Transverse colon (tissue), 4 donors: ENCODE measurements at regions of chr6 and their contacts with region 1.

Region 1: DNA sequence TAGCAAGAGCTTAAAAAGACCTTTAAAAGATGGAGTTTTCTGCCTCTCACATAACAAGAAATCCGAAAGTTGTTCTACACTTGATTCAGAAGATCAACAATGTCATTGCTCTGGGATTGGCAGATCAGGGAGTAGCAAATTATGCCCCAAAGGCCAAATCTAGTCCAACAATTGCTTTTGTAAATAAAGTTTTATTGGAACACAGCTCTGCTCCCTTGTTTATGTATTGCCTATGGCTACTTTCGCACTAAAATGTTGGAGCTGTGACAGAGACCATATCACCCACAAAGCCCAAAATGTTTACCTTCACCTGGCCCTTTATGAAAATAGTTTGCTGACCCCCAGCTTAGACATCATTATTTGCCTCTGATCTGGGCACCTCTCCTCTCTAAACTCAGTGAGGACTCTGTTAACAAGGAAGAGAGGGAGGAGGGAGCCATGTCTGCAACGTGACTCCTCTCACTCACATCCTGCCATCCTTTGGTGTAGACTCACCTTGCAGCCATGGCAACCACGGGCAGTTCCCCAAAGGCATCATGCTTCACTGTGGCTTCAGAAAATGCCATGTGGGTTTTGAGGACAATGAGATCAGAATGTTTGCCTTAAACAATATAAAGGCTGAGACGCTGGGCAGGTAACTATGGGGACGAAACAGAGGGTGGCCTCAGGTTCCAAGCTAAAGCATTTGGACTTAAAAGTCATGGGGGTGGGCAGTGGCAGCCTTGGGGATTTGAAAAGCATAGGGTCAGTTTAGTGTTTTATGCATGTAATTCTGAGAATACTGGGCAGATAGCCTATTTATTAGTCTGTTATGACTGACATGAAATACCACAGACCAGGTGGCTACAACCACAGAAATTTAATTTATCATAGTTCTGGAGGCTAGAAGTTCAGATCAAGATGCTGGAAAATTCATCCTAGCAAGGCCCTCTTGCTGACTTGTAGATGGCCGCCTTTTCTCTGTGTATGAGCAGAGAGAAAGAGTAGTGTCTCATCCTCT is 149.7 kb upstream of the TNFAIP3 start:
- DNase-seq: no peak
- H3K4me3 ChIP-seq: no peak overlapping the region
- H3K27ac ChIP-seq: no peak overlapping the region
- H3K4me1 ChIP-seq: no peaks in the 10 kb centered on the region
- H3K27me3 ChIP-seq: no peaks in the 10 kb centered on the region
- CTCF ChIP-seq: no peak
- EP300 ChIP-seq: no peak
- POLR2A ChIP-seq: no peak

Region 2: DNA sequence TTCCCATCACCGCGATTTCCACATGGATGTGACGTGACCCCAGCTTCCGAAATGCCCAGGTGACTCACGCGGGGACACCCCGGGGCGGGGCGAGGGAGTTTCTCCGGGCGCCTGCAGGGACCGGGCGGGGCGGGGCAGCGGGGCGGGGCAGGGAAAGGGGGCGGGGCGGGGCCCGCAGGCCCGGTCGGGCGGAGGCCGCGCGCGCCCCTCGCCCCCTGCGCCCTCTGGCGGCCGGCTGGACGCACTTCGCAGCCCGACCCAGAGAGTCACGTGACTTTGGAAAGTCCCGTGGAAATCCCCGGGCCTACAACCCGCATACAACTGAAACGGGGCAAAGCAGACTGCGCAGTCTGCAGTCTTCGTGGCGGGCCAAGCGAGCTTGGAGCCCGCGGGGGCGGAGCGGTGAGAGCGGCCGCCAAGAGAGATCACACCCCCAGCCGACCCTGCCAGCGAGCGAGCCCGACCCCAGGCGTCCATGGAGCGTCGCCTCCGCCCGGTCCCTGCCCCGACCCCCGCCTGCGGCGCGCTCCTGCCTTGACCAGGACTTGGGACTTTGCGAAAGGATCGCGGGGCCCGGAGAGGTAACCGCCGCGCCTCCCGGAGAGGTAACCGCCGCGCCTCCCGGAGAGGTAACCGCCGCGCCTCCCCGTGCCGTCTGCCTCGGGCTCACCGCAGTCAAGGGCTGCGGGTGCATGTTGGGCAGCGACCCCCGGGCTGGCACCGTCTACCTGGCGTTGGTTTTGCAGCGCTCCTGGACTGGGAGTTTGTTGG is 149.7 kb after region 1 on chr6 and contains the start of gene TNFAIP3:
- in situ Hi-C with region 1: loop called in 2 of 4 experiments (anchors 5 to 10 kb)
- intact Hi-C with region 1: no loop called
- DNase-seq: peak; percentile 96
- H3K4me3 ChIP-seq: peak within 1 kb of the TSS; percentile 66 to 84 (median 72)
- H3K27ac ChIP-seq: peak within 1 kb of the TSS; percentile 91 to 98 (median 97)
- H3K4me1 ChIP-seq: peaks cover 5 to 59% (median 21%) of the 10 kb centered on the region in 4 donors
- H3K27me3 ChIP-seq: no peaks in the 10 kb centered on the region
- CTCF ChIP-seq: peak; percentile 63 to 81 (median 71)
- EP300 ChIP-seq: peak; percentile 12
- POLR2A ChIP-seq: peak; percentile 96
- total RNA-seq, gene TNFAIP3: 21.4 to 46.8 (median 36.3) TPM